HepG2 (cell line): ENCODE measurements at regions of chr1 and their contacts with region 1.

Region 1: DNA sequence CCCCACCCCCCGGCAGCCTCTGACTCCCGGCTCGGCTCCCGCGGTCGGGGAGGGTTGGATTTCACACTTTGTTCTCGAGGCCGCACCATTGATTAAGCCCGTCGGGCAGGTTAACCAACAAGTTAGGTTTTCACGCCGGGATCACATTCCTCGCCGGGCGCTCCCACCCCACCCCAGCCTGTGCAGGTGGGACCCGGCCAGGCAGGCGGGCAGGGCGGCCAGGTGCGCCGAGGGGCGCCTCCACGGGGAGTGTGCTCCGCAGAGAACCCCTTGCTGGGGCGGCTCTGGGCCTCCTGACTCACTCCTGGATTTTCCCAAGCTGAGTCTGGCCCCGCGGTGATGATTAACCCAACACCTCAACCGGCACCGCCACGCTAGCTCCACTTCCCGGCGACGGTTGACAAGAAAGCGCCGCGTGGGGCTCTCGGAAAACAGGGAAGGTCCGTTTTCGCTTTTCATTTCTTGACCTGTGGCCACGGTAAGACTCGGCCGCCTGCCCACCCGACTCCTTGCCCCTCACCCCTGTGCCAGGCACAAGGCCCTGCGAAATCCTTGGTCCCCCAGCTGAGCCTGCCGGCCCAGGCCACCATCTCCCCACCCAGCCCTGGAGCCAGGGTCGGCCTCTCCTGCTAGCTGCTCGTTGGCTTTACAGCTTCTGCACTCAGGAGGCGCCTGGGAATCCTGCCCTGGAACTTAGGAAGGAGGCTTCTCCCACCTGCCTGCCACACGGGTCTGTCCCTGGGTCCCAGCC is 8.8 kb upstream of the TTLL10 start:
- DNase-seq: peak; percentile 50
- ATAC-seq: peak; percentile 57
- H3K4me3 ChIP-seq: peak overlapping the region; percentile 47 to 68 (median 67); a peak in 5 of 6 replicates
- H3K27ac ChIP-seq: peak overlapping the region; percentile 34
- H3K4me1 ChIP-seq: peaks cover 56% of the 10 kb centered on the region
- H3K27me3 ChIP-seq: no peaks in the 10 kb centered on the region
- CTCF ChIP-seq: 0 out of 2 replicates have a peak, but pooled peaks have one; percentile 7
- EP300 ChIP-seq: no peak
- POLR2A ChIP-seq: peak in 1 of 2 experiments; percentile 65; a peak in 2 of 4 replicates
- RAD21 ChIP-seq: no peak

Region 2: DNA sequence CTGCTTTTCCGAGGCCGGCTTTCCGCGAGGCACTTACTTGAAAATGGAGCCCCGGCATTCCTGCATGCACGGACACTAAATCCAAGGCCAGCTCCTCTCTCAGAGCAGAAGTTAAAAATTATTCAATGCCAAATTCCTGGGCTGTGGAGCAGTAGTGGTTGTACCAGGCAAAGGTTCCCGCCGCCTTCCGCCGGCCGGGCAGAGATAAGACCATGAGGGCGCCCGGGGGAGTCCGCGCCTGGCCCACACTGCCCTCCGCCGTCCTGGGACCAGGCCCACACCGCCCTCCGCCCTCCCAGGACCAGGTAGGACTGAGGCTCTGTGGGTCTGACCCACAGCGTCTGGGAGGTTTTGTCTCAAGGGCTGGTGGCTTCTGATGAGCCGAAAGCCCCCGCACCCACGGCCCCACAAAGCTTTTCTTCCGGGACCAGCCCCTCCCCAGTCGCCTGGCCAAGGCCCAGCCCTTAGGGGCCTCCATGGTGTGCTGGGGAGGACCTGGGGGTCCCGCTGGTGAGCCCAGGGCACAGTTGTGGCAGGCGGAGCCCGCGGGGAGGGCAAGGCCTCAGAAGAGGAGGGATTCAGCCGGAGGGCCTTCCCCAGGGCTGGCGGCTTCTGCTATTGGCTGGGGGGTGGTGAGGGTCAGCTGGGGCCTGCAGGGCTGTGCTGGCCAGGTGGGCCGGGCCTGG is 36.3 kb before region 1 on chr1:
- CTCF ChIA-PET with region 1: no interaction called
- POLR2A ChIA-PET with region 1: interaction called, 93 read pairs
- in situ Hi-C with region 1: no loop called
- intact Hi-C with region 1: loop called (anchors 1 kb)
- DNase-seq: peak; percentile 70
- ATAC-seq: peak; percentile 27
- H3K4me3 ChIP-seq: peak overlapping the region; percentile 67 to 82 (median 79)
- H3K27ac ChIP-seq: peak overlapping the region; percentile 84
- H3K4me1 ChIP-seq: peaks cover 73% of the 10 kb centered on the region
- H3K27me3 ChIP-seq: no peaks in the 10 kb centered on the region
- CTCF ChIP-seq: peak; percentile 21; the same call in 1 of the 2 replicates
- EP300 ChIP-seq: no peak
- POLR2A ChIP-seq: peak in 1 of 2 experiments; percentile 62; a peak in 2 of 4 replicates
- RAD21 ChIP-seq: no peak

Region 3: GRCh38 chr1:1153874-1154273 is 11.0 kb before region 1 on chr1:
- CTCF ChIA-PET with region 1: no interaction called
- POLR2A ChIA-PET with region 1: interaction called, 14 read pairs
- in situ Hi-C with region 1: no loop called
- intact Hi-C with region 1: no loop called
- DNase-seq: peak; percentile 43
- ATAC-seq: no peak; the same call in 2 of the 3 replicates
- H3K4me3 ChIP-seq: no peak overlapping the region
- H3K27ac ChIP-seq: no peak overlapping the region
- H3K4me1 ChIP-seq: peaks cover 34% of the 10 kb centered on the region
- H3K27me3 ChIP-seq: no peaks in the 10 kb centered on the region
- CTCF ChIP-seq: no peak
- EP300 ChIP-seq: no peak
- POLR2A ChIP-seq: no peak
- RAD21 ChIP-seq: no peak

Region 4: GRCh38 chr1:1206376-1207260 is 41.7 kb after region 1 on chr1 and contains the start of gene TNFRSF18:
- CTCF ChIA-PET with region 1: no interaction called
- POLR2A ChIA-PET with region 1: no interaction called
- in situ Hi-C with region 1: no loop called
- intact Hi-C with region 1: no loop called
- DNase-seq: no peak
- ATAC-seq: peak; percentile 31
- H3K4me3 ChIP-seq: peak within 1 kb of the TSS in 1 of 3 experiments; percentile 18; a peak in 1 of 6 replicates
- H3K27ac ChIP-seq: no peak within 1 kb of the TSS
- H3K4me1 ChIP-seq: no peaks in the 10 kb centered on the region
- H3K27me3 ChIP-seq: peaks cover 18 to 77% of the 10 kb centered on the region in 2 experiments; a peak in 4 of 5 replicates
- CTCF ChIP-seq: peak; percentile 36; the same call in 1 of the 2 replicates
- EP300 ChIP-seq: no peak
- POLR2A ChIP-seq: no peak
- RAD21 ChIP-seq: no peak
- total RNA-seq, gene TNFRSF18: not detected in 2 replicates

Region 5: DNA sequence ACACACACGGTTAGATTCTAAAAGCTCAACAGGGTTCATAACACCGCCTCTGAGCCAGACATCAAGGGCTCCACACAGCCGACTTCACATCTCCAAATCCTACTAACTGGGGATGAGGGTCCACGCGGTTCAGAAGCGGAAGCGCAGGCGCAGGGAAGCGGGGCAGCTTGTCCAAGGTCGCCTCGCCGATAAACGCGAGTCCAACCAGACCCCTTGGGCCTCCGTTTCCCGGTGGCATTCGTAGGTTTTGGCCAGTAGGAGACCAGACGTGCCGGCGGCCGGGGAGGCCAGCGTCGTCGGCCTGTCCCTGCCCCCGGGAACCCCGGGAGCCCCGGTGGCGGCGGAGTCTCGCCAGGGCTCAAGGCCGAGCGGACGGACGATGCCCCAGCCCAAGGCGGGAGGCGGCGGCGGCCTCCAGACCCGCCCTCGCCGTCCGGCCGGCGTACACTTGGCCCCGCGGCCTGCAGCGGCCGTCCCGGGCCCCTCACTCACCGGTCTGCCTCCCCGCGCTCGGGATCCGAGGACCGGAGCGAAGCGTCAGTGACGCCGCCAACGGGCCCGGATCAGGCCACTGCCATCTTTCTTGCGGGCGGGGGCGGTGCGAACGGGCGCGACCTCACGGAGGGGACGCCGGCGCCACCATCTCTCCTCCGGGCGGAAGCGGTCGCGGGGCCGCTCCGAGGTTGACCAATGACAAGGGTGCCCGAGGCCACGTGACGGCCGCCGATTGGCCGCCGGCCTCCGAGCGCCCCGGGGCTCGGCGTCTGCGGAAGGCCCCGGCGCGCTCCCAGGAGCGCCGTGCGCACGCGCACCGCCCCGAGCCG is 66.7 kb after region 1 on chr1 and contains the start of gene SDF4:
- CTCF ChIA-PET with region 1: no interaction called
- POLR2A ChIA-PET with region 1: interaction called, 13 read pairs
- in situ Hi-C with region 1: no loop called
- intact Hi-C with region 1: loop called (anchors 10 kb)
- DNase-seq: peak; percentile 88
- ATAC-seq: peak; percentile 84
- H3K4me3 ChIP-seq: peak within 1 kb of the TSS; percentile 73 to 93 (median 91)
- H3K27ac ChIP-seq: peak within 1 kb of the TSS; percentile 88
- H3K4me1 ChIP-seq: peaks cover 58% of the 10 kb centered on the region
- H3K27me3 ChIP-seq: no peaks in the 10 kb centered on the region; a peak in 2 of 5 replicates
- CTCF ChIP-seq: 0 out of 2 replicates have a peak, but pooled peaks have one; percentile 3
- EP300 ChIP-seq: no peak
- POLR2A ChIP-seq: peak in 1 of 2 experiments; percentile 68; a peak in 2 of 4 replicates
- RAD21 ChIP-seq: peak; percentile 67
- total RNA-seq, gene SDF4: 45.3 and 107 TPM in 2 replicates

Region 6: DNA sequence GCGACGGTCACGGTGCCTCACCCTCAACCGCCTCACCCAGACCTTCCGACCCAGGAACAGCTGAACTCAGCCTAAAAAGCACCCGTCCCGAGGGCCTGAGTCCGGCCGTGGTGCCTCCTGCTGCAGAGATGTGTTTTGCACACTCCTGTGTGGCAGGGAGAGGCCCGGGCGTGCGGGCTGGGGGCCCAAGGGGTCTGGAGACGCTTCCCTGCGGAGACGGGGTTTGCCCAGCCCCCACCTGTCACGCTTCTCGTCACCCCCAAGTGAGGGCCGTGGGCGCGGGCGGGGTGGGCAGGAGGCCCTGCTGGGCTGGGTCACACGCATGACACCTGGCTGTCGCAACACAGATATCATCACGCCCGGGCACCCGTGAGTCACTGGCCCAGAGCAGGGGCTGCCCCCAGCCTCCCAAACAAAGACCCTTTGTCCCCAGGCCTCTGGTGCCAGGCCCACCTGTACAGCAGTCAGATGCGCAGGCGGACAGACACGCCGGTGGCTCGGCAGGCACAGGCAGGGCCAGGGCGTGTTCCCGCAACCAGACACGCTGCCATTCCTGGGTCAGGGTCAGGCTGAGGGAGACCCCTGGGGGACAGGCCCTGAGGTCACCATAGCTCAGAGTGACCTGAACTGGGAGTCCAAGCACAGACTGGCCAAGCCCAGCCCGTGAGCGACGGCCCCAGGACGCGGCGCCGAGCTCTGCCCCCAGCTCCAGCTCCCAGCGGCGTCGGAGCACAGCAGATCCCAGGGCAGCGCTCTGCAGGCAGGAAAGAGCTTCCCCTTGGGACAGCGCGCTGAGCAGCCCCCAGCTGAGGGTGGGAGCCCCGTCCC is 73.2 kb after region 1 on chr1:
- CTCF ChIA-PET with region 1: no interaction called
- POLR2A ChIA-PET with region 1: interaction called, 13 read pairs
- in situ Hi-C with region 1: no loop called
- intact Hi-C with region 1: loop called (anchors 10 kb)
- DNase-seq: peak; percentile 84
- ATAC-seq: peak; percentile 58
- H3K4me3 ChIP-seq: peak overlapping the region; percentile 39 to 80 (median 47)
- H3K27ac ChIP-seq: peak overlapping the region; percentile 48
- H3K4me1 ChIP-seq: peaks cover 80% of the 10 kb centered on the region
- H3K27me3 ChIP-seq: no peaks in the 10 kb centered on the region; a peak in 1 of 5 replicates
- CTCF ChIP-seq: peak; percentile 45; the same call in 1 of the 2 replicates
- EP300 ChIP-seq: peak in 1 of 2 experiments; percentile 38; a peak in 1 of 4 replicates
- POLR2A ChIP-seq: peak in 1 of 2 experiments; percentile 50; a peak in 1 of 4 replicates
- RAD21 ChIP-seq: no peak

Region 7: GRCh38 chr1:1462318-1462966 is 297.6 kb after region 1 on chr1:
- CTCF ChIA-PET with region 1: no interaction called
- POLR2A ChIA-PET with region 1: no interaction called
- in situ Hi-C with region 1: no loop called
- intact Hi-C with region 1: no loop called
- DNase-seq: peak; percentile 51
- ATAC-seq: peak; percentile 87
- H3K4me3 ChIP-seq: peak overlapping the region; percentile 33 to 71 (median 49); a peak in 5 of 6 replicates
- H3K27ac ChIP-seq: no peak overlapping the region
- H3K4me1 ChIP-seq: peaks cover 37% of the 10 kb centered on the region
- H3K27me3 ChIP-seq: peaks cover 6 to 16% of the 10 kb centered on the region in 2 experiments; a peak in 4 of 5 replicates
- CTCF ChIP-seq: no peak
- EP300 ChIP-seq: no peak
- POLR2A ChIP-seq: peak in 1 of 2 experiments; percentile 40; a peak in 1 of 4 replicates
- RAD21 ChIP-seq: no peak